Activated CD4-positive, alpha-beta memory T cell treated with anti-CD3 and anti-CD28 coated beads for 36 hours (primary cell): ENCODE measurements at regions of chr4 and their contacts with region 1.

Region 1: DNA sequence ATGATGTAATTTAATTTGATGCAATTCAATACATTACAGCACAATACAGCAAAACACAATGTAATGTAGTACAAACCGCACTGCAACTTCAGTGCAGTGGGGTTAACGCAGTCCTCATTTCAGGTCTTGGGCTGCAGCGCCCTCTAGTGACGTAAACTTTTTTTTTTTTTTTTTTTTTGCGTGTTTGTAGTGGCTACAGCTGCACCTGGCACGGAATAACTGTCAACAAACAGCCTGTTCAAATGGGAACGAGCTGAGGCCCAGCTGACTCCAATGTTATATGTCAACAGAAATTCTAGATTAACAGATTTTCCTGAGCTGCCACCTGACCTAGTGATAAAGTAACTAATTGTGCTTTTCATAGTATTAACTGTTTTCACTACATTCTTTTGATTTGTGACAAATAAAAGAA is 33.5 kb upstream of the RASSF6 start:
- DNase-seq: no peak
- H3K4me3 Mint-ChIP-seq: no peak overlapping the region
- H3K27ac Mint-ChIP-seq: no peak overlapping the region
- H3K4me1 Mint-ChIP-seq: no peaks in the 10 kb centered on the region
- H3K27me3 Mint-ChIP-seq: peaks cover 2% of the 10 kb centered on the region

Region 2: DNA sequence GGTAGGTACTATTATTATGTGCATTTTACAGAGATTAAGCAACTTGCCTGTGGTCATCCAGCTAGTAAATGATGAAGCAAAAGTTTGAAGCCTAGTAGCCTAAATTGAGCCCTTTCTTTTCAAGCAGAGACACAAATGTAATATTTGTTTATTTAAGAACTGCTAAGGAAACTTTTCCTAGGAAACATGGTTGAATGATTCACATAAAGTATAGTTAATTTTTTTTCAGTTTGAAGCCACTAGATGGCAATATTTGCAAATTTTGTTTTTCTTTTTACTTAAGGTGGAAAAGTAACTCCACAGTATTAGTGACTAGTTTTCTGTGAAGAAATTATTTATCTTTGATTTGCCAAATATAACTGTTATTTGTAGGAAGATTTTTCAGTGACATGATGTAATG is 342.3 kb before region 1 on chr4:
- CTCF ChIA-PET with region 1: interaction called, 4 read pairs
- POLR2A ChIA-PET with region 1: no interaction called
- intact Hi-C with region 1: loop called (anchors 1 kb)
- DNase-seq: no peak
- H3K4me3 Mint-ChIP-seq: no peak overlapping the region
- H3K27ac Mint-ChIP-seq: no peak overlapping the region
- H3K4me1 Mint-ChIP-seq: no peaks in the 10 kb centered on the region
- H3K27me3 Mint-ChIP-seq: peaks cover 2% of the 10 kb centered on the region

Region 3: DNA sequence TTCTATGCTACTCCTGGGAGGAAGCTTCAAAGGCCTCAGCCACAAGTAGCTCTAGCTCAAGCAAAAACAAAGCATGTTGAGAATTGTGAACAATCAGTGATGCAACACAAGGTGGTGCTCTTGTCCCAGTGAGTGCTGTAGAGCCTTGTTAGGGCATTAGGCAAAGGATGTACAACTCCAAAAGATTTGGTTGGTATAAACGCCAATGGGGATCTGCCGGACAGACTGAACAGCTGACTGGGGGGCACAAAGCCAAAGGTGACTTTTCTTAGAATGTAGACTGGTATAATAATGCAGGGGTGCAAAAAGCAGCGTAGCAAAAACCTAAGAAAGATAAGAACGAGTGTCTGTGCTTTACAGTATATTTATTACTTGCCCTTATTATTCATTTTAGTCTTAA is 312.2 kb before region 1 on chr4:
- CTCF ChIA-PET with region 1: no interaction called
- POLR2A ChIA-PET with region 1: no interaction called
- intact Hi-C with region 1: loop called (anchors 5 kb)
- DNase-seq: peak; percentile 13
- H3K4me3 Mint-ChIP-seq: no peak overlapping the region
- H3K27ac Mint-ChIP-seq: no peak overlapping the region
- H3K4me1 Mint-ChIP-seq: no peaks in the 10 kb centered on the region
- H3K27me3 Mint-ChIP-seq: peaks cover 3% of the 10 kb centered on the region

Region 4: GRCh38 chr4:73573794-73574406 is 79.8 kb before region 1 on chr4:
- CTCF ChIA-PET with region 1: interaction called, 8 read pairs
- POLR2A ChIA-PET with region 1: no interaction called
- intact Hi-C with region 1: loop called (anchors 5 kb)
- DNase-seq: peak; percentile 30
- H3K4me3 Mint-ChIP-seq: no peak overlapping the region
- H3K27ac Mint-ChIP-seq: no peak overlapping the region
- H3K4me1 Mint-ChIP-seq: no peaks in the 10 kb centered on the region
- H3K27me3 Mint-ChIP-seq: no peaks in the 10 kb centered on the region

Region 5: GRCh38 chr4:73593631-73594241 is 60.0 kb before region 1 on chr4:
- CTCF ChIA-PET with region 1: no interaction called
- POLR2A ChIA-PET with region 1: no interaction called
- intact Hi-C with region 1: loop called (anchors 5 kb)
- DNase-seq: no peak
- H3K4me3 Mint-ChIP-seq: no peak overlapping the region
- H3K27ac Mint-ChIP-seq: no peak overlapping the region
- H3K4me1 Mint-ChIP-seq: no peaks in the 10 kb centered on the region
- H3K27me3 Mint-ChIP-seq: peaks cover 2% of the 10 kb centered on the region